Right cardiac atrium (tissue), 5 donors: ENCODE measurements at regions of chr14 and their contacts with region 1.

Region 1: GRCh38 chr14:50714450-50715073 is 46.5 kb upstream of the SAV1 start:
- DNase-seq: no peak
- ATAC-seq: no peak
- H3K4me3 ChIP-seq: no peak overlapping the region
- H3K27ac ChIP-seq: no peak overlapping the region
- H3K4me1 ChIP-seq: no peaks in the 10 kb centered on the region
- H3K27me3 ChIP-seq: no peaks in the 10 kb centered on the region

Region 2: DNA sequence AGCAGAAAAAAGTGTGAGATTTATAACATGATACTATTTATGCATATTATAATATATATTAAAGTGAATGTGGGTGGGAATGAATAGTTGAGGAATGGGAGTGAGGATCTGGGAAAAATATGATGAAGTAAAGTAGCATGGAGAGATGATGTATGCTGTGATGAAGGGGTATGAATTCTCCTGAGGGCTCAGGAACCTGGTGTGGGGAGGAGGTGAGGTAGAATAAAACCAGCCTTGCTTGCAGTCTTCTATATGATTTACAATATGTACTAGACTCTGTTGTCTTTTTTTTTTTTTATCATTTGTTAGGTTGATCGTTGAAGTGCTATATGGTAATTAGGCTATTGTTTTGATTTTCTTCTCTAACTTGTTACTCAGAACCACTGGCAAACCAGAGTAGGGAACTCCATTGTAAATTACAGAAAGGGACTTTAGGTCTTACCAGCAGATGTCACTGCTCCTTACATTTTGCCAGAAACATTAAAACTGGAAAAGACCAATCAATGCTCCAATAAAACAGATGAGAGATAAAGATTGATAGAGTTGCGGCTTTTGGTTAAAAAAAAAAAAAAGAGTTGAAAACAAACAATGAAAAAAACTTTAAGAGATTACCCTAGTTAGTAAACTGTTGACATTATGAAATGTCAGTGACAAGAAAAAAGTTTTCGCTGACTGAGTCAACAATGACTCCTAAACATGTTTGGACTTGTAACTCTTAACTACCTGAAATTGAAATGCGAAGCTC is 114.7 kb before region 1 on chr14:
- intact Hi-C with region 1: loop called in 1 of 4 experiments (anchors 10 kb)
- DNase-seq: no peak
- ATAC-seq: peak in 1 of 2 donors; percentile 51
- H3K4me3 ChIP-seq: no peak overlapping the region
- H3K27ac ChIP-seq: no peak overlapping the region
- H3K4me1 ChIP-seq: no peaks in the 10 kb centered on the region
- H3K27me3 ChIP-seq: no peaks in the 10 kb centered on the region

Region 3: GRCh38 chr14:50619556-50620141 is 94.9 kb before region 1 on chr14:
- intact Hi-C with region 1: loop called in 1 of 4 experiments (anchors 10 kb)
- DNase-seq: no peak
- ATAC-seq: peak; percentile 34 to 45
- H3K4me3 ChIP-seq: no peak overlapping the region
- H3K27ac ChIP-seq: no peak overlapping the region
- H3K4me1 ChIP-seq: no peaks in the 10 kb centered on the region
- H3K27me3 ChIP-seq: no peaks in the 10 kb centered on the region

Region 4: GRCh38 chr14:50756300-50756699 is 41.7 kb after region 1 on chr14:
- intact Hi-C with region 1: no loop called
- DNase-seq: no peak
- ATAC-seq: no peak
- H3K4me3 ChIP-seq: no peak overlapping the region
- H3K27ac ChIP-seq: no peak overlapping the region
- H3K4me1 ChIP-seq: no peaks in the 10 kb centered on the region
- H3K27me3 ChIP-seq: no peaks in the 10 kb centered on the region